ENCODE measurements at regions of chr20 and their contacts with region 1.

Region 1: GRCh38 chr20:45436732-45437391 is 20.9 kb downstream of the PIGT start:
- DNase-seq: peak; percentile 43 to 94
- H3K4me3 ChIP-seq: peak overlapping the region; percentile 60 to 86
- H3K27ac ChIP-seq: peak overlapping the region; percentile 84 to 92
- H3K4me1 ChIP-seq: peaks cover 0 to 3% of the 10 kb centered on the region in 2 donors
- H3K27me3 ChIP-seq: no peaks in the 10 kb centered on the region
- CTCF ChIP-seq: peak; percentile 92 to 99 (median 94)

Region 2: GRCh38 chr20:45318948-45319347 is 117.9 kb before region 1 on chr20:
- intact Hi-C with region 1: loop called (anchors 1 kb)
- DNase-seq: no peak
- H3K4me3 ChIP-seq: no peak overlapping the region
- H3K27ac ChIP-seq: no peak overlapping the region
- H3K4me1 ChIP-seq: no peaks in the 10 kb centered on the region
- H3K27me3 ChIP-seq: no peaks in the 10 kb centered on the region
- CTCF ChIP-seq: no peak

Region 3: GRCh38 chr20:45373353-45374100 is 63.3 kb before region 1 on chr20:
- intact Hi-C with region 1: loop called (anchors 1 kb)
- DNase-seq: peak in 1 of 2 donors; percentile 93
- H3K4me3 ChIP-seq: peak overlapping the region; percentile 60 to 65
- H3K27ac ChIP-seq: peak overlapping the region; percentile 84 to 92
- H3K4me1 ChIP-seq: peaks cover 0 to 11% of the 10 kb centered on the region in 2 donors
- H3K27me3 ChIP-seq: no peaks in the 10 kb centered on the region
- CTCF ChIP-seq: peak; percentile 84 to 90 (median 86)

Region 4: DNA sequence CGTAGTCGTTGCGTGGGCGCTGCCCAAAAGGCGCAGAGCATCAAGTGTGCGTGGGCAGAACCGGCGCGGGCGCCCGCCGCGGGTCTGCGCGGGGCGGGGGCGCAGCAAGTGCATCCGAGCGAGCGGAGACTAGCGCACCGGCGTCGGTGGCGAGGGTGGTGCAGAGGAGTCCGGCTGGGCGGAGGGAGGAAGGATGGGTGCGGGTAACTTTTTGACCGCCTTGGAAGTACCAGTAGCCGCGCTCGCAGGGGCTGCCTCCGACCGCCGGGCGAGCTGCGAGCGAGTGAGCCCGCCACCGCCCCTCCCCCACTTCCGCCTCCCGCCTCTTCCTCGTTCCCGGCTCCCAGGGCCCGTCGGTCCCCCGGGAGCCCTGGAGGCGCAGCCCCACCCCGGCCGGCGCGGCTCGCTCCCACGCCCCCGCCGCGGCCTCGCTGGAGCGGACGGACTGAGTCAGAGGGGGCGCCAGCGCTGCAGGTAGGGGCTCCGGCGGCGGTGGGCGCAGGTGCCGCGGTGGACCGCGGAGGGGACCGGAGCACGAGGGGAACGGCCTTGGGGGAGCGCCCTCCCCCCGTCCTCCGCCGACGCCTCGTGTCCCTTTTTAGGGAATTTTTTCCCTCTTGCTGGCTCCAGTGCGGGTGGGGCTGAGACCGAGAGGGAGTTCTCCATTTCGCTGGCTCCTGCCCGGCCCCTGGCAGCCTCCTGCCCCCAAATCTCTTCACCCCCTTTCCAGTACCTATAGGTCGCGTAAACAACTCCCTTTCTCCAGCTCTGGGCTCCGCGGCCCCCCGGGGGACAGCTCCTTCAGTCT is 30.4 kb before region 1 on chr20:
- intact Hi-C with region 1: loop called (anchors 2 kb)
- DNase-seq: peak; percentile 38 to 90
- H3K4me3 ChIP-seq: peak overlapping the region; percentile 81 to 98
- H3K27ac ChIP-seq: peak overlapping the region; percentile 95 to 99
- H3K4me1 ChIP-seq: peaks cover 9 to 20% of the 10 kb centered on the region in 2 donors
- H3K27me3 ChIP-seq: no peaks in the 10 kb centered on the region
- CTCF ChIP-seq: no peak

Region 5: GRCh38 chr20:45415774-45416637 is 20.9 kb before region 1 on chr20 and contains the start of gene PIGT:
- intact Hi-C with region 1: loop called (anchors 2 kb)
- DNase-seq: peak; percentile 64 to 94
- H3K4me3 ChIP-seq: peak within 1 kb of the TSS; percentile 89 to 91
- H3K27ac ChIP-seq: peak within 1 kb of the TSS; percentile 76 to 83
- H3K4me1 ChIP-seq: peaks cover 6 to 25% of the 10 kb centered on the region in 2 donors
- H3K27me3 ChIP-seq: no peaks in the 10 kb centered on the region
- CTCF ChIP-seq: no peak
- total RNA-seq, gene PIGT: 142 TPM

Region 6: DNA sequence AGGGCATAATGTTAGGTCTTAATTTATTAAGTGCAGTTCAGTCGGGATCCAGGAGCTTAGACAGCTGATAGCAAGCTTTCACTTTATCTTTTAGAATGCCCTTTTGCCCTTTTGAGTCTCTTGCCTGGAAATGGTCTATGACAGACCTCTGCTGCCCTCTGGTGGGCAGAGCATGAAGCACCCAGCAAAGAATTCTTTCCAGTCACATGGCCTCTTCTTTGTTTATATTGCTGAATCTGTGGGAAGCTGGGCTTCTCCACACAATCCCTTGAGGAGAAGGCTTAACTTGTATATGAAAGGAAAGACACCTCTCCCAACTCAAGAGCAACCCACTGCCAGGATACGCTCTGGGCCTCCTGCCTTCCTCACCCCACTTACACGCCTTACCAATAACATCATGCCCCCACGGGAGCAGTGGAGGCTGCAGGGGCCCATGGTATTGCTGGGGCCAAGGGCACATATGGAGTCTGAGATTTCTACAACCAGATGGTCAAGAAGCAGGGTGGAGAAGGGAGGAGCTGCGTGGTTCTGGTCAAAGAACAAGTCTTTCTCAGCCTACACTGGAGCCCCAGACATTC is 334.4 kb after region 1 on chr20:
- intact Hi-C with region 1: loop called (anchors 1 kb)
- DNase-seq: peak in 1 of 2 donors; percentile 91
- H3K4me3 ChIP-seq: no peak overlapping the region
- H3K27ac ChIP-seq: peak overlapping the region; percentile 45 to 46
- H3K4me1 ChIP-seq: peaks cover 0 to 10% of the 10 kb centered on the region in 2 donors
- H3K27me3 ChIP-seq: no peaks in the 10 kb centered on the region
- CTCF ChIP-seq: peak; percentile 85 to 93 (median 91)

Measured in ascending aorta (tissue), 2 donors.